GM13977 (cell line): ENCODE measurements at regions of chr10 and their contacts with region 1.

Region 1: GRCh38 chr10:23525406-23525805 is 86.5 kb downstream of the OTUD1 start:
- DNase-seq: peak; percentile 14
- CTCF ChIP-seq: peak; percentile 32

Region 2: GRCh38 chr10:23325132-23325531 is 200.3 kb before region 1 on chr10:
- in situ Hi-C with region 1: loop called (anchors 10 kb)
- DNase-seq: no peak
- CTCF ChIP-seq: peak; percentile 43